ENCODE measurements at regions of chr11 and their contacts with region 1.

Region 1: GRCh38 chr11:60748821-60749220 is 7.8 kb upstream of the MS4A15 start:
- DNase-seq: no peak
- H3K4me3 ChIP-seq: no peak overlapping the region
- H3K27ac ChIP-seq: no peak overlapping the region
- H3K4me1 ChIP-seq: no peaks in the 10 kb centered on the region
- H3K27me3 ChIP-seq: peaks cover 24% of the 10 kb centered on the region
- CTCF ChIP-seq: no peak
- EP300 ChIP-seq: no peak
- POLR2A ChIP-seq: no peak

Region 2: DNA sequence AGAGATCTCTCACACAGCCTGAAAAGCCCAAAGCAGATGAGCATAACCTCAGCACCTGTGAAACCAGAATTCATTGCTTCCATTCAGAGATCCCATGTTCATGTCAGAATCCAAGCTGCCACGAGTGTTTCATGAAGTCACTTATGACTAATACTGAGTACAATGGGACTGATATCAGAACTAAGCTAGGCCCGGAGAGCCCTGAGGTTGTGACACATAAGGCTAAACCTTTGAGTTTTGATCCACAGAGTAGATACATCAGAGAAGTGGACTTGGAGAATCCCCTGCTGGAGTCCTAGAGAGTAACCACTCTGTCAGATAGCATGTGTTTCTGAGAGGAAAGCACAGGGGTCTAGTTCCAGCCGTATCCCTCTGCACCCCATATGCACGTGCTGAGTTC is 1810.4 kb before region 1 on chr11:
- in situ Hi-C with region 1: no loop called
- intact Hi-C with region 1: loop called (anchors 5 kb)
- DNase-seq: no peak
- H3K4me3 ChIP-seq: no peak overlapping the region
- H3K27ac ChIP-seq: no peak overlapping the region
- H3K4me1 ChIP-seq: no peaks in the 10 kb centered on the region
- H3K27me3 ChIP-seq: no peaks in the 10 kb centered on the region
- CTCF ChIP-seq: no peak
- EP300 ChIP-seq: no peak
- POLR2A ChIP-seq: no peak

Region 3: GRCh38 chr11:59891781-59892181 is 857.0 kb before region 1 on chr11:
- in situ Hi-C with region 1: no loop called
- intact Hi-C with region 1: no loop called
- DNase-seq: no peak
- H3K4me3 ChIP-seq: no peak overlapping the region
- H3K27ac ChIP-seq: no peak overlapping the region
- H3K4me1 ChIP-seq: no peaks in the 10 kb centered on the region
- H3K27me3 ChIP-seq: no peaks in the 10 kb centered on the region
- CTCF ChIP-seq: no peak
- EP300 ChIP-seq: no peak
- POLR2A ChIP-seq: no peak

Measured in transverse colon (tissue), 4 donors.